Cardiac septum (tissue), 1 donor: ENCODE measurements at regions of chrX and their contacts with region 1.

Region 1: DNA sequence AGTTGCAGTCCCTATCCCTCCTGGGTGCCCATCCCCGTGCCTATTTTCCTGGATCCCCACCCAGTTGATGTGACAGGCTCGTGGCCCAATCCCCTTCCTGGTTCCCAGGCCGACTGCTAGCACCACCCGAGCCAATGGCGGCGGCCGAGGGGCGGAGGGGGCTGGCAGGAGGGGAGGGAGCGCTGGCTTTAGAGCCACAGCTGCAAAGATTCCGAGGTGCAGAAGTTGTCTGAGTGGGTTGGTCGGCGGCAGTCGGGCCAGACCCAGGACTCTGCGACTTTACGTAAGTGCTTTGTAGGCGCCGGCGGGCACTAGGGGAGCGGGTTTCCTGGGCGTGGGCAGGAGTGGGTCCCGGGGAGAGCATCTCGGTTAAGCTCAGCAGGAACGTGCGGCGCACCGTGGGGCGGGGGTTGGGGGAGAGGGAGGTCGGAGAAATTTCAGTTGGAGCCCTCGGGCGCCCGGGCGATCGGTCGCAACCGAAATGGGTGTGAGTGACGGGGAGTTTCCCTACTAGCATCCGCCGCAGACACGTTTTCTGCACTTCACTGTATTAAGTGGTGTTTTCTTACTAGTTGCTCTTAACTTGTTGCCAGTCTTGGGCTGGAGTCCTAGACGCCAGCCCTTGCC is at the start of gene PLS3:
- DNase-seq: peak; percentile 90
- total RNA-seq, gene PLS3: 50.3 TPM

Region 2: GRCh38 chrX:115174548-115174947 is 386.5 kb before region 1 on chrX:
- intact Hi-C with region 1: no loop called
- DNase-seq: no peak

Region 3: GRCh38 chrX:115268421-115268820 is 292.7 kb before region 1 on chrX:
- intact Hi-C with region 1: no loop called
- DNase-seq: no peak

Region 4: GRCh38 chrX:115344885-115345614 is 216.0 kb before region 1 on chrX:
- intact Hi-C with region 1: loop called (anchors 5 kb)
- DNase-seq: peak; percentile 86

Region 5: DNA sequence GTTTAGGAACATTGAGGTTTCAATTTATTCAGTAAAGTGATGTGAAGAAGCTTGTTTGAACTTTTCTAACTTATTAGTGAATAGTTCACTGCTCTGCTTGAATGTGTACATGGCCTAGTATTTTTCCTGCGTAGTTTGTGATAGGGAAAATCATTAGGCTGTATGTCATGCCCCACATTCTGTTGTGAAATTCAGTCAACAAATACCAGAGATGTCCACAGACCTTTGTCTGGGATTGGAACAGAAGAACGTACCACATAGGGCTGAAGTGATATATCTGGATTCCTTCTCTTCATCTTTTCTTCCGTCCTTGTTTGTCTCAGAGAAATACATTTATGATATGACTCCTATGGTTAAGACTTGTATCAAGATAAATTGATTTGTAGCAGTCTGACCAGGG is 89.0 kb before region 1 on chrX:
- intact Hi-C with region 1: no loop called
- DNase-seq: no peak

Region 6: DNA sequence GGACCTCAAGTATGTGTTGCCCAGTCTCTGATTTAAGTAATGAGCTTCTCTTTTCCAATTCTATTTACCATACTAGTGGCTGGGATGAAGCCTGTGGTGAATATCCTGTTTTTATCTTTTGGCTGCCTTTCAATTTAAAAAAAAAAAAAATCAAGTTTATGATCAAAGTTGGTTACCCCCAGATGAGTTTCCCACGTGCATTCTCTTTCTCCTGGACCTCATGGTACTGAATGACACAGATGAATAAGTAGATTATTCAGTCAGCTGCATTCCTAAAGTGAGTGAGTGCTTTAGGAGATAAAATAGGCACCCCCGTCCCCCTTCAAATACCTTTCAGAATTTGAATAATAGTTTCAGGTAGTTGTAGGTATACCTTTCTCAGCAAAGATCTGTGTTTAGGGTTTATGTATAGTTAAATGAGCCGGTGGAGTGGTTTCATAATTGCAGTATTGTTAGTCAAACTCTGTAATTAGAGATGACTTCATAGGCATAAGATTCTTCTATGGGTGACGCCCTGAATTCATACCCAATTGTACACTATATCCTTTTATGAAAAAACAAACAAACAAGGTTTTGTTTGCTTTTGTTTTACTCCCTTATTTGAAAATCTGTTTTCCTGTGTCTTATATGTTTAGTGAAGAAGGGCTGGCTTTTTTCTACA is 41.8 kb after region 1 on chrX:
- intact Hi-C with region 1: loop called (anchors 5 kb)
- DNase-seq: no peak

Region 7: DNA sequence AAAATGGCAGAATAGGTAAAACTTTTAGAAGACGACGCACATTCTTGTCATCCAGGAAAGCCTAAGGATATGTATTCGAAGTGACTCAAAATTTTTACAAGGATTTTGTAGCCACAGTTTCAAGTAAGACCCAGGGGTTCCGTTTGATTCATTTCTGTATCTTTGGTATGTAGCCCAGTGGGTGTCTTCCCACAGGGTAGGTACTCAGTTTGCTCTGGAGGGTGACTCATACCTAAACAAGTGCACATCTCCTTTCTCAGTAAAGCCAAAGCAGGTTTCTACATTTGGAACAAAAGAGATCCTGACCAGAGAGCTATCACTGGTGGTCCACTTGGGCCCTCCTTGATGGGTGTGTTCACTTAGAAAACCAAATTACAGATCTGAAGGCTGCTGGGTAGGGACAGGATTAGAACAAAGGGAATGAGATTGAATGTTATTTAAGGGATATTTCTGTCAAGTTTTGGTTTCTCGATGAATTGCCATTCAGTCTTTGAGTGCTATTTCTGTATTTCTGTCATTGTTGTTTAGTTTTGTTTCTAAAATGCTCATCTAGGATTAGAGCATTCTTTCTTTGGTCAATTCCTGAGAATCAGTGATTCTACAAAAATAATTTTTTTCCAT is 56.0 kb after region 1 on chrX:
- intact Hi-C with region 1: loop called (anchors 5 kb)
- DNase-seq: no peak

Region 8: GRCh38 chrX:115642895-115643530 is 81.9 kb after region 1 on chrX:
- intact Hi-C with region 1: loop called (anchors 5 kb)
- DNase-seq: no peak

Region 9: DNA sequence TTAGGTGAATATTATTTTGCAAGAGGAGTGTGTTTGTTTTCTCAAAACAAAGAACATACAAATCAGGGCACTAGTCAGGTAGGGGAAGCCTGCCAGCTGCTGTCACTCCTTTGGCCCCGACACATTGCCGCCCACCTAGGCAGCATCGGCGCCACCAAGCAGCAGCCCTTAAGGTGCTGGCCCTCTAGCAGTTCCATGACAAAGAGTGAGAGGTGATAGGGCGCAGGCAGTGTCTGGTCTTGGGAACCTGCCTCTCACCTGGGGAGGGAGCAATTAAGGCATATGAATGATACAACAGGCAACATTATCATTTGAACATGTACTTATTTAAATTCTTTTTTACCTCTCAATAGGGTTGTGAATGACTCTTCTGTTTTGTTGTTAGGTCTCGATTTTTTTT is 134.9 kb after region 1 on chrX:
- intact Hi-C with region 1: no loop called
- DNase-seq: no peak